AG04450 (cell line): ENCODE measurements at regions of chr9 and their contacts with region 1.

Region 1: GRCh38 chr9:115013998-115014397 is 83.6 kb upstream of the TNFSF8 start:
- DNase-seq: peak; percentile 69
- H3K4me3 ChIP-seq: no peak overlapping the region
- H3K27ac ChIP-seq: no peak overlapping the region
- H3K27me3 ChIP-seq: no peaks in the 10 kb centered on the region
- CTCF ChIP-seq: peak; percentile 87

Region 2: DNA sequence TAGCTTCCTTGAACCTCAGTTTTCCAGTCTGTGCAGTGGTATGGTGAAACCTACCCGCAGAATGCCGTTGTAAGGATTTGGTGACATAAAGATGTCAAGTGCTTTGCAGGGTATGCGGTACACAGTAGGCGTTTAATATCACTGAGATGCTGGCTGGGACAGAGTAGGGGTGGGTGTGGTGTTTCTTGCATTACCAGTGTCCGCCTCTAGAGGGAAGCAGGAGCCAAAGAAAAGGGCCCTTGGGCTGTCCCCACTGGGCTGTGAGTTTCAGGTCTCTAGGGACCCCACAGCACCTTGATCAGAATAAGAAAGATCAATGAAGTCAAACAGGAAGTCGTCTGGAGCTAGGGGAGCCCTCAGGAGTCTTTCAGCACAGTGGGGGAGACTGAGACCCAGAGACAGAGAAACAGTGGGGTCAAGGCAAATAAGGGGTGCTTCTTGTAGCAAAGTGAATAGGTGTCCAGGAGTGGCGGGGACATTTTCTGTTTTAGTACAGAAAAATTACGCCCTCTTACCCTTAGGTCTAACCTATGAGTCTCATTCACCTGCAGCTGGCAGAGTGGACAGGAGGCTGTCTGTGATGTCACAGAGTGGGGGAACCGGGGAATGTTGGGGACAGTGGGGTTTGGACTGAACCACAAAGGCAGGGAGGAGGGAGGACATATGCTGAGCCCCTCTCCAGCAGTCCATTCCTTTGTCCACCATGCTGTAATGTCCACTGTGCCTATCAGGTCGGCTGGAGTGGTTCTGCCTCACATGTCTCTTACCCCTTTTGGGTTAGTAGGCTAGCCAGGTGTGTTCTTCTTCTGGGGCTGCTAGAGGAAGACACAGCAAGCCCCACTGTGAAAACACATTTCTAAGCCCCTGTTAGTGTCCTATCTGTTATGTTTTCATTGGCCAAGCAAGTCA is 351.7 kb before region 1 on chr9:
- CTCF ChIA-PET with region 1: interaction called, 40 read pairs
- POLR2A ChIA-PET with region 1: no interaction called
- DNase-seq: no peak
- H3K4me3 ChIP-seq: no peak overlapping the region
- H3K27ac ChIP-seq: no peak overlapping the region
- H3K27me3 ChIP-seq: peaks cover 17% of the 10 kb centered on the region
- CTCF ChIP-seq: peak; percentile 93

Region 3: GRCh38 chr9:114738581-114739316 is 275.2 kb before region 1 on chr9:
- CTCF ChIA-PET with region 1: interaction called, 41 read pairs
- POLR2A ChIA-PET with region 1: no interaction called
- DNase-seq: peak; percentile 78
- H3K4me3 ChIP-seq: no peak overlapping the region
- H3K27ac ChIP-seq: no peak overlapping the region
- H3K27me3 ChIP-seq: no peaks in the 10 kb centered on the region
- CTCF ChIP-seq: peak; percentile 92

Region 4: GRCh38 chr9:115524453-115525059 is 510.6 kb after region 1 on chr9:
- CTCF ChIA-PET with region 1: interaction called, 14 read pairs
- POLR2A ChIA-PET with region 1: no interaction called
- DNase-seq: peak; percentile 55
- H3K4me3 ChIP-seq: no peak overlapping the region
- H3K27ac ChIP-seq: no peak overlapping the region
- H3K27me3 ChIP-seq: no peaks in the 10 kb centered on the region
- CTCF ChIP-seq: peak; percentile 87